ENCODE measurements at regions of chr18 and their contacts with region 1.

Region 1: GRCh38 chr18:56650944-56651770 is at the start of gene WDR7:
- H3K4me3 Mint-ChIP-seq: peak within 1 kb of the TSS; percentile 88
- H3K27ac Mint-ChIP-seq: peak within 1 kb of the TSS; percentile 85
- H3K4me1 Mint-ChIP-seq: peaks cover 63% of the 10 kb centered on the region
- H3K27me3 Mint-ChIP-seq: no peaks in the 10 kb centered on the region

Region 2: DNA sequence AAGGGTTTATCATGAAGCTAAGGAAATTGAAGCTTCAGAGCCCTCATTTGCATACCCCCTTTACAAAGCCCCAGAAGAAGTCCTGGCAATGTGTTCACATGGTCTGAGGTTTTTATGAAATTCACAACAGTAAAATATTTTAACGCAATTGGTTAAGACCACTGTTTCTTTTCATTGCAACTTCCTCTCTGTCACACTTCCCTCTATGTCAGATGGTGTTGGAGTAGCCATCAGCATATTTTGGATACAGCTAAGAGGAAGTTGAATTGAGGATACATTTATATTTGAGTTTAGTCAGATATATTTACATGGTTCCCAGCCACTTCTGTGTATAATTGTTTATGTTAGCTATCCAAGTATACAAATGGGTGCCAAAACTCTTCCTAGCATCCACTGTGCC is 182.8 kb before region 1 on chr18:
- intact Hi-C with region 1: loop called (anchors 2 kb)
- H3K4me3 Mint-ChIP-seq: no peak overlapping the region
- H3K27ac Mint-ChIP-seq: peak overlapping the region; percentile 88
- H3K4me1 Mint-ChIP-seq: peaks cover 25% of the 10 kb centered on the region
- H3K27me3 Mint-ChIP-seq: no peaks in the 10 kb centered on the region

Region 3: GRCh38 chr18:56638271-56639093 is 12.7 kb before region 1 on chr18 and contains the start of gene TXNL1:
- intact Hi-C with region 1: loop called (anchors 1 kb)
- H3K4me3 Mint-ChIP-seq: peak within 1 kb of the TSS; percentile 99
- H3K27ac Mint-ChIP-seq: peak within 1 kb of the TSS; percentile 100
- H3K4me1 Mint-ChIP-seq: peaks cover 34% of the 10 kb centered on the region
- H3K27me3 Mint-ChIP-seq: no peaks in the 10 kb centered on the region